ENCODE measurements at regions of chr20 and their contacts with region 1.

Region 1: GRCh38 chr20:1392823-1393506 is at the start of gene FKBP1A:
- DNase-seq: peak; percentile 73 to 92
- ATAC-seq: peak; percentile 89 to 92
- H3K4me3 ChIP-seq: peak within 1 kb of the TSS; percentile 76 to 96 (median 91)
- H3K27ac ChIP-seq: peak within 1 kb of the TSS; percentile 83 to 90 (median 87)
- H3K4me1 ChIP-seq: peaks cover 47 to 49% of the 10 kb centered on the region in 2 donors
- H3K27me3 ChIP-seq: peaks cover 0 to 3% (median 3%) of the 10 kb centered on the region in 3 donors
- CTCF ChIP-seq: peak in 3 of 5 experiments; percentile 4 to 39 (median 29)
- POLR2A ChIP-seq: peak; percentile 85 to 88
- total RNA-seq, gene FKBP1A: 27.7 to 89.4 (median 52.5) TPM

Region 2: GRCh38 chr20:1313236-1313964 is 79.6 kb before region 1 on chr20:
- in situ Hi-C with region 1: no loop called
- intact Hi-C with region 1: loop called (anchors 1 kb)
- DNase-seq: peak; percentile 52 to 61
- ATAC-seq: peak; percentile 85 to 93
- H3K4me3 ChIP-seq: peak overlapping the region in 3 of 4 donors; percentile 23 to 37 (median 32)
- H3K27ac ChIP-seq: no peak overlapping the region
- H3K4me1 ChIP-seq: peaks cover 0 to 10% of the 10 kb centered on the region in 2 donors
- H3K27me3 ChIP-seq: no peaks in the 10 kb centered on the region
- CTCF ChIP-seq: peak; percentile 94 to 99 (median 97)
- POLR2A ChIP-seq: no peak

Region 3: DNA sequence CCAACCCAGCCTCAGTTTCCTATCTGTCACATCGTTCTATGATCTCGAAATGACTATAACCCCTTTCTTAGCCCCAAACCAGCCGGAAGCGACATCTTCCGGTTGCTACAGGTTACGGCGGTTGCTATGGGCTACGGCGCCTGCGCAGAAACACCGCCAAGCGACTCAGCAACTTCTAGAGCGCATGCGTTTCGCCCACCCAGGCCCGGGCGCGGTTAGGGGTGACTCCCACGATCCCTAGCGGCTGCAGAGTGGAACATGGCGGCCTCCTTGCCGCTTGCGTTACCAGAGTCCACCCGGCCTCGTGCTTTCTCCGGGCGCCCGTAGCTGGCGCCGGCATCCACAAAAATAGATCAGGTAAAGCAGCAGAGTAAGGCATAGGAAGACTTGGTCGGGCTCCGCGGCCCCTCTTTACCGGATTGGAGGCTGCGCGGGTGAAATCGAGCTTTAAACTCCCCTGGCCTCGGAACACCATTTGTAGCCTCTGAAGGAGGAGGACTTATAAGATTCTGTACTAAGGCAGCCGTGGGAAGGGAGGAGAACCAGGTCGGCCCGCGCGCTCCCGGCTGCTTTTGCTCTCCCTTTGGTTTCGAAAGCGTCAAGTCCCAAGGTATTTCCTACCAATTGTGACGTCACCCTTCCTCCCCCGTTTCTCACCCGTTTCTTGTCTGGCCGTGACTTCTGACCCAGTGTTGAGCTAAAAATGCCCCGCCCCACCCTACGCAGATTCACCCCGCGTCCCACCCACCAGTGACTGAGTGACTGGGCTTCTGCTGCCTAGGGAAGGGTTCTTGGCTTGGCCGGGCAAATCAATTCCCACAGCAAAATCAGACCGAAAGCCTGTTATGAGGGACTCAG is 67.6 kb before region 1 on chr20:
- in situ Hi-C with region 1: loop called in 3 of 4 experiments (anchors 5 to 10 kb)
- intact Hi-C with region 1: loop called (anchors 1 kb)
- DNase-seq: peak; percentile 96 to 97
- ATAC-seq: peak; percentile 79
- H3K4me3 ChIP-seq: peak overlapping the region; percentile 63 to 94 (median 81)
- H3K27ac ChIP-seq: peak overlapping the region; percentile 93 to 99 (median 97)
- H3K4me1 ChIP-seq: peaks cover 53 to 69% of the 10 kb centered on the region in 2 donors
- H3K27me3 ChIP-seq: no peaks in the 10 kb centered on the region
- CTCF ChIP-seq: peak in 3 of 5 experiments; percentile 21 to 45 (median 44)
- POLR2A ChIP-seq: peak; percentile 92 to 94

Region 4: GRCh38 chr20:1491281-1491840 is 98.4 kb after region 1 on chr20 and contains the start of gene SIRPB2:
- in situ Hi-C with region 1: no loop called
- intact Hi-C with region 1: no loop called
- DNase-seq: peak; percentile 18 to 41
- ATAC-seq: peak in 1 of 2 donors; percentile 41
- H3K4me3 ChIP-seq: peak within 1 kb of the TSS in 1 of 4 donors; percentile 31
- H3K27ac ChIP-seq: peak within 1 kb of the TSS in 1 of 4 donors; percentile 28
- H3K4me1 ChIP-seq: no peaks in the 10 kb centered on the region
- H3K27me3 ChIP-seq: no peaks in the 10 kb centered on the region
- CTCF ChIP-seq: no peak
- POLR2A ChIP-seq: no peak
- total RNA-seq, gene SIRPB2: 0.94 to 6.2 (median 1.5) TPM

Region 5: DNA sequence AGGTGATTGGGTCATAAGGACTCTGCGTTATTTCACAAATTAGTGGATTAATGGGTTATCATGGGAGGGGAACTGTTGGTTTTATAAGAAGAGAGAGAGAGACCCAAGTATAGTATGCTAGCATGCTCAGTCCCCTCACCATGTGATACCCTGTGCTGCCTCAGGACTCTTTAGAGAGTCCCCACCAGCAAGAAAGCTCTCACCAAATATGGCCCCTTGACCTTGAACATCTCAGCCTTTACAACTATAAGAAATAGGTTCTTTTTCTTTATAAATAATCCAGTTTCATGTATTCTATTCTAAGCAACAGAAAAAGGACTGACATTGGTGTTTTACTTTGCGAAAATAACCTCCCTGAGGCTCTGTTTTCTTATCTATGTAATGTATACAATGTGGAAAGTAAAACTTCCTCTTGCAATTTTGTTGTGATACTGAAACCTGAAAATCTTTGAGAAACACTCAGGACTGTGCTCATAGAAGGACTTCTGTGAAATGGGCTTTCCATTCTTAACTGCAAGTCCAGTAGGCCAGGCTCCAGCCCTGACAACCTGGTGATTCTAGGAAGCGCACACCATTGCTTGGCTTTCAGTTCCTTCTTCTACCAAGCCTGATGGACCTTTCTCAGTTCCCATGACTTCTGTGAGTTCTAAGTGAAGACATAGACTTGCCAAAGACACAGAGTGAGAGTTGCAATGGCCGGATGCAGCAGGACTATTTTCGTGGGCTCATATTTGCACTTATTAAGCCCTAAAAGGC is 142.6 kb after region 1 on chr20:
- in situ Hi-C with region 1: no loop called
- intact Hi-C with region 1: no loop called
- DNase-seq: peak in 1 of 2 donors; percentile 16
- ATAC-seq: no peak
- H3K4me3 ChIP-seq: no peak overlapping the region
- H3K27ac ChIP-seq: no peak overlapping the region
- H3K4me1 ChIP-seq: no peaks in the 10 kb centered on the region
- H3K27me3 ChIP-seq: no peaks in the 10 kb centered on the region
- CTCF ChIP-seq: no peak
- POLR2A ChIP-seq: no peak